ENCODE measurements at regions of chr7 and their contacts with region 1.

Region 1: GRCh38 chr7:149497456-149498261 is at the start of gene ZNF746:
- DNase-seq: peak; percentile 56
- H3K4me3 ChIP-seq: peak within 1 kb of the TSS; percentile 72 to 90 (median 77)
- H3K27ac ChIP-seq: peak within 1 kb of the TSS; percentile 49
- H3K4me1 ChIP-seq: peaks cover 11% of the 10 kb centered on the region
- H3K27me3 ChIP-seq: peaks cover 5 to 15% of the 10 kb centered on the region in 2 experiments
- CTCF ChIP-seq: peak; percentile 53 to 73
- POLR2A ChIP-seq: peak; percentile 65
- total RNA-seq, gene ZNF746: 20.8 and 22.3 TPM in 2 replicates

Region 2: GRCh38 chr7:149125863-149126661 is 371.6 kb before region 1 on chr7 and contains the start of gene ZNF425:
- CTCF ChIA-PET with region 1: interaction called, 3 read pairs
- POLR2A ChIA-PET with region 1: no interaction called
- dilution Hi-C with region 1: no loop called
- intact Hi-C with region 1: loop called (anchors 10 kb)
- DNase-seq: peak; percentile 93
- H3K4me3 ChIP-seq: peak within 1 kb of the TSS; percentile 56 to 96 (median 86)
- H3K27ac ChIP-seq: peak within 1 kb of the TSS; percentile 39
- H3K4me1 ChIP-seq: peaks cover 13% of the 10 kb centered on the region
- H3K27me3 ChIP-seq: no peaks in the 10 kb centered on the region
- CTCF ChIP-seq: peak; percentile 94 to 97
- POLR2A ChIP-seq: peak; percentile 81
- total RNA-seq, gene ZNF425: 0.93 and 2.0 TPM in 2 replicates

Region 3: DNA sequence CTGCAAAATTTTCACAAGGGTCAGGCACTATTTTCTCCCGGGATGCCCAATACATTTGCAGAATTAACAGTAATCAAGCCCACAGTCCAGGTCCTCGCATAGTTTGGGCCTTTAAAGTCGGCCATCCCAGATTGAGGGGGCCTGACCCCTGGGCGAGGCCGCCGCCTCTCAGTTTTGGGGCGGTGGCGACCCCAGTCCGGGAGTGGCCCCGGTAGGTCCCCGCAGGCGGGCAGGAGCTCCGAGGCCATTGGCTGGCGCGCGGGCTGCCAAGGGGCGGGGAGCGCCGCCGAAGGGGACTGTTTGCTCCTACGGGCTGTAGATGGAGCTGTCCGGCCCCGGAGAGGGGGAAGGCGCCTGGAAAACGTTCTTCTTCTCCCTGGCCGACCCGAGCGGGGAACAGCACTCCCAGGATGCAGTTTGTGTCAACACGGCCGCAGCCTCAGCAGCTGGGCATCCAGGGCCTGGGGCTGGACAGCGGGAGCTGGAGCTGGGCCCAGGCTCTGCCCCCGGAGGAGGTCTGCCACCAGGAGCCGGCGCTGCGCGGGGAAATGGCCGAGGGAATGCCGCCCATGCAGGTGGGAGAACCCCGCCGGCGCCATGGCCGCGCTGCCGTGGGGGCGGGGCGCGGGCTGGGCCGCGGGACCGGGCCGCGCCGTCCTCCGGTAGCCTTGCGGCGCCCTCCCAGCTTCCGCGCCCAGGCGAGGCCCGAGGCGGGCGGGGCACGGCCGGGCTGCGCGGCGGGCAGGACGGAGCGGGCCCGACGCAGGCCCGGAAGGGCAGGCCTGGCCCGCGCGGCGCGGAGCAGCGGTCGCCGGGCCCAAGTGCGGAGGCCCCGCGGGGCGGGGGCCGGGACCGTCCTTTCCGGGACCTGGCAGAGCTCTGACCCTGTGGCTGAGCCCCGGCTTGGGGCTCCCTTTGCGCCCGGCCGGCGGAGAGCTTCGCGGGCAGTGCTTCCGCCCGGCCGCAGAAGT is 302.2 kb before region 1 on chr7 and contains the start of gene ZNF282:
- CTCF ChIA-PET with region 1: interaction called, 3 read pairs
- POLR2A ChIA-PET with region 1: no interaction called
- dilution Hi-C with region 1: no loop called
- intact Hi-C with region 1: loop called (anchors 2 kb)
- DNase-seq: peak; percentile 91
- H3K4me3 ChIP-seq: peak within 1 kb of the TSS; percentile 70 to 83 (median 78)
- H3K27ac ChIP-seq: peak within 1 kb of the TSS; percentile 61
- H3K4me1 ChIP-seq: peaks cover 25% of the 10 kb centered on the region
- H3K27me3 ChIP-seq: peaks cover 0 to 2% of the 10 kb centered on the region in 2 experiments
- CTCF ChIP-seq: peak; percentile 75 to 79
- POLR2A ChIP-seq: peak; percentile 90
- total RNA-seq, gene ZNF282: 34.4 and 36.0 TPM in 2 replicates

Region 4: DNA sequence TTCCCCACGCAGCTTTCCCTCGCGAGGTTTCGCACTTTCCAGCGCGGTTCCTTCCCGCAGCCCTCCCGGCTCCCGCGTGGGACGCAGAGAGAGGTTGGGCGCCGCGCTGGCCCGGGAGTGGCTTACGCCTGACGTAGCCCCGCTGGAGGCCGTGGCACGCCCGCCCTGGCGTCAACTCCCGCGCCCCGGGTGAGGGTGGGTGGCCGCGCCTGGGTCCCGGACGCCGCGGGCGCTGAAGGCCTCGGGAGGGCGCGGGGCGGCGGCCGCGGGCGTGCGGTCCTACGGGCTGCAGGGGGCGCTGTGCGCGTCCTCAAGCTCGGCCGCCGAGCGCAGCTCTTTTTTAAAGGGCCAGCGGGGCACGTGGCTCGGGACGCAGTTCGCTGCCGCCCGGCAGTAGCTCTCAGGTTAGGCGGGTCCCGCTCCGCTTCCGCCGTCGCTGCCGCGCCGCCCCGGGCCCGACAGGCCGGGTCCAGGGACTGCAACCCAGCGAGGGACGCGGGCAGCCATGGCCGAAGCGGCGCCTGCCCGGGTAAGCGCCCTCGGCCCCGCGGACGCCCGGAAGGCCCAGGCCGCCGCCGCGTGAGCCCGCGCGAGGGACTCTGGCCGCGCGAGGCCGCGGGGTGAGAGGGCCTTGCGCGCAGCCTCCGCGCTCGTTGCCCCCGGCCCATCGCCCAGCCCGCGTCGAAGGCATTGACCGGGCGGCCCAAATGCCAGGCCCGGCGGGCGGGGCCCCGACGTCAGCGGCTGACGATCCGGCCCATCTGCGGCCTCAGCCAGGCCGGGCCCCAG is 235.6 kb before region 1 on chr7 and contains the start of gene ZNF783:
- CTCF ChIA-PET with region 1: interaction called, 4 read pairs
- POLR2A ChIA-PET with region 1: no interaction called
- dilution Hi-C with region 1: no loop called
- intact Hi-C with region 1: loop called (anchors 1 kb)
- DNase-seq: peak; percentile 85
- H3K4me3 ChIP-seq: peak within 1 kb of the TSS; percentile 19 to 61 (median 44)
- H3K27ac ChIP-seq: peak within 1 kb of the TSS; percentile 55
- H3K4me1 ChIP-seq: peaks cover 3% of the 10 kb centered on the region
- H3K27me3 ChIP-seq: no peaks in the 10 kb centered on the region
- CTCF ChIP-seq: peak; percentile 71 to 87
- POLR2A ChIP-seq: no peak
- total RNA-seq, gene ZNF783: 9.2 and 9.8 TPM in 2 replicates

Region 5: DNA sequence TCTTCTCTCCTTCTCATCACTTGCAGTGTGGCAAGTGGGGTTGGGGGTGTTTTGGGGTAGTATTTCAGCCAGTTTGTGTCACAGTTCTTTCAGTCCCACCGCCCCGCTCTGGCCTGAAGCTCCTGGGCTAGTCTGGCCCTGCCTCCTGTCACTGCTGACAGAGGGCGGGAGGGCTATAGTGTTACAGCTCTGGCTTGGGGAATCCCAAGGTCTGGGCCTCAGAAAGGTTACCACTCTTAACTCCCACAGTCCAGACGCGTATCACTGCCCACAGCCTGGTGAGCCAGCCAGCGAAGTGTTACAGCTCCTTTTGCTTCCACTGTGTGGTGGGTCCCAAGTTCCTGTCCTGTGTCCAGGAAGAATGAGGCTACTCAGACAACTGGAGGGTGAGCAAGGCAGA is 92.8 kb before region 1 on chr7:
- CTCF ChIA-PET with region 1: no interaction called
- POLR2A ChIA-PET with region 1: no interaction called
- dilution Hi-C with region 1: no loop called
- intact Hi-C with region 1: no loop called
- DNase-seq: no peak
- H3K4me3 ChIP-seq: no peak overlapping the region
- H3K27ac ChIP-seq: no peak overlapping the region
- H3K4me1 ChIP-seq: no peaks in the 10 kb centered on the region
- H3K27me3 ChIP-seq: peaks cover 0 to 4% of the 10 kb centered on the region in 2 experiments
- CTCF ChIP-seq: no peak
- POLR2A ChIP-seq: no peak

Region 6: GRCh38 chr7:149422129-149422913 is 75.3 kb before region 1 on chr7:
- CTCF ChIA-PET with region 1: interaction called, 4 read pairs
- POLR2A ChIA-PET with region 1: no interaction called
- dilution Hi-C with region 1: no loop called
- intact Hi-C with region 1: loop called (anchors 1 kb)
- DNase-seq: peak; percentile 69
- H3K4me3 ChIP-seq: peak overlapping the region; percentile 26 to 42 (median 41)
- H3K27ac ChIP-seq: no peak overlapping the region
- H3K4me1 ChIP-seq: peaks cover 10% of the 10 kb centered on the region
- H3K27me3 ChIP-seq: no peaks in the 10 kb centered on the region
- CTCF ChIP-seq: peak; percentile 68 to 72
- POLR2A ChIP-seq: no peak

Region 7: GRCh38 chr7:149742075-149742701 is 244.5 kb after region 1 on chr7:
- CTCF ChIA-PET with region 1: no interaction called
- POLR2A ChIA-PET with region 1: no interaction called
- dilution Hi-C with region 1: no loop called
- intact Hi-C with region 1: loop called (anchors 5 kb)
- DNase-seq: peak; percentile 71
- H3K4me3 ChIP-seq: peak overlapping the region in 2 of 3 experiments; percentile 6 to 10
- H3K27ac ChIP-seq: no peak overlapping the region
- H3K4me1 ChIP-seq: no peaks in the 10 kb centered on the region
- H3K27me3 ChIP-seq: peaks cover 0 to 7% of the 10 kb centered on the region in 2 experiments
- CTCF ChIP-seq: peak; percentile 85 to 86
- POLR2A ChIP-seq: no peak

Measured in endothelial cell of umbilical vein (primary cell).